ENCODE measurements at regions of chr3 and their contacts with region 1.

Region 1: DNA sequence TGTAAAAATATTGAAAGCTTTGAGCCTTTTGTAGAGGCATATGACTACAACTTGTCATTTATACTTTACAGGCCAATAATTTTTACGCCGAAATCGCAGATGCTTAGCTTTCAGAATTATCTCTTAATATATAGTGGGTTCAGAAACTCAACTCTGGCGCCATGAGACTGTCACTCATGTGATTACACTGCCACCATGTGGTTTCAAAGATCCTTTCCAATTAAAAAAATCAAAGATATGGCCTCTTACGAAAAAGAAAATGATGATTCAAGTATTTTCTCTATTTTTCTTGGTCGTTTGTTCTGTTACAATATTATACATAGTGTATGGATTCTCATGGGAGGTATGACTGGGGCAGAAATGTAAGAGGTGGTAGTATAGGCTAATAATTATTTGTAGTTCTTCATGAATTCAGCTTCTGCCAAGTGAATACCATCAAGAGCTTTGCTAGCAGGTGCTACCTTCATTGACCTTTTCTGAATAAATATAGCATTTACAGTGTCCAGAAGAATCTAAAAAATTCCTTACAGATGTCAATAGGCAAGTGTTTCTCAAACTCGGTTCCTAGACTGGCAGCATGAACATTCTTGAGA is 751.7 kb upstream of the GOLIM4 start:
- DNase-seq: peak in 27 of 42 donors; percentile 9 to 64 (median 35)

Region 2: GRCh38 chr3:168213920-168214319 is 633.5 kb before region 1 on chr3:
- intact Hi-C with region 1: loop called (anchors 5 kb)
- DNase-seq: no peak

Region 3: DNA sequence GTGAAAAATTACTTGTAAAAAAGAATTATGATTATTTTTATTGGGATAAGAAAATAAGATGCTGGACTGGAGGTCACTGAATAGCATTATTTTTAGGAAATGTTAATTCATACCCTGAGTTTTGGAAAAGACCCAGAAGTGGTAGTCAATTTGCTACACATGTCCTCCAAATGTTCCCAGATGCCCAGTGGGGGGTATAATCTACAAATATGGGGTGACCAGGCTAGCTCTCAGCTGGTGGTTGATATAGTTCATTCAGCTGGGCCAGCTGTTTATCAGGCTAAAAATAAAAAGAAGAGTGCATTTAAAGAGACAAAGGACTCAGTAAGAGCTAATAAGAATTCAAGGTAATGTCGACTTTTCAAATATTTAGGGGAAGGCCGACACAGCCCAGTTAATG is 349.6 kb before region 1 on chr3:
- intact Hi-C with region 1: loop called (anchors 10 kb)
- DNase-seq: no peak

Region 4: GRCh38 chr3:168801794-168802193 is 45.6 kb before region 1 on chr3:
- intact Hi-C with region 1: no loop called
- DNase-seq: no peak

Region 5: DNA sequence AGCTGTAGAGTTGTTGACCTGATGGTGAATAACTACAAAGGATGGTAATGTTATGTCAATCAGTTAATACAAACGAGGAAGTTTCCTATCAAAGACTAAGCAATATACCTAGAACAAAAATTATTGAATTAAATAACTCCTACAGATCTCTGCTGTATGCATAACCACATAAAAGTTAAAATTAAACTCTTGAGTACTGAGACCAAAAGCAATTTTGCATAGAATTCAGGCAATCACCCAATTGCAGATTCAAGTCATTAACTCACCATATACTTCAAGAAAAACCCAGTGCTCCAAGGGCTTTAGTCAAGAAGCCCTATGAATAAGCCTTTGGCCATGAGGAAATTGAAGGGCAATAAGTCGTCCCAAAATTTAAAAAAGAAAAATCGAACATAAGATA is 297.3 kb after region 1 on chr3:
- intact Hi-C with region 1: no loop called
- DNase-seq: no peak

Measured in head of caudate nucleus (tissue), 42 donors.